HEK293T (cell line): ENCODE measurements at regions of chr2 and their contacts with region 1.

Region 1: DNA sequence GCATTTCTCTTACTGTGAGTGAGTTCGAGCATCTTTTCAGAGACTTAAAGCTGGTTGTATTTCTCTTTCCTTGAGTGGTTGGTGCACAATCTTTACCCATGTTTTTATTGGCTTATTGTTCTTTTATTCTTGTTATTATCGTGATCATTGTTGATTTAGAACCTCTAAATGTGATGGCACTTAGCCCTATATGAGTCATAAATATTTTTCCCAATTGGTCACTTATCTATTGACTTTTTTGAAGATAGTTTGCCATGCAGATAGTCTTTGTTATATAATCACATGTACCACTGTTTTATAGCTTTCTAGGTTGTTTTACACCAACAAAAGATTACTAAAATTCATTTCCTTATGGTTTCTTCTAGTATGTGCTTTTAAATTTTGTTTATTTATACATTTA is 141.6 kb upstream of the MSH6 start:
- DNase-seq: no peak

Region 2: GRCh38 chr2:47653902-47654789 is 12.8 kb after region 1 on chr2:
- CTCF ChIA-PET with region 1: interaction called, 11 read pairs
- POLR2A ChIA-PET with region 1: interaction called, 3 read pairs
- DNase-seq: peak; percentile 18